ENCODE measurements at regions of chr21 and their contacts with region 1.

Region 1: DNA sequence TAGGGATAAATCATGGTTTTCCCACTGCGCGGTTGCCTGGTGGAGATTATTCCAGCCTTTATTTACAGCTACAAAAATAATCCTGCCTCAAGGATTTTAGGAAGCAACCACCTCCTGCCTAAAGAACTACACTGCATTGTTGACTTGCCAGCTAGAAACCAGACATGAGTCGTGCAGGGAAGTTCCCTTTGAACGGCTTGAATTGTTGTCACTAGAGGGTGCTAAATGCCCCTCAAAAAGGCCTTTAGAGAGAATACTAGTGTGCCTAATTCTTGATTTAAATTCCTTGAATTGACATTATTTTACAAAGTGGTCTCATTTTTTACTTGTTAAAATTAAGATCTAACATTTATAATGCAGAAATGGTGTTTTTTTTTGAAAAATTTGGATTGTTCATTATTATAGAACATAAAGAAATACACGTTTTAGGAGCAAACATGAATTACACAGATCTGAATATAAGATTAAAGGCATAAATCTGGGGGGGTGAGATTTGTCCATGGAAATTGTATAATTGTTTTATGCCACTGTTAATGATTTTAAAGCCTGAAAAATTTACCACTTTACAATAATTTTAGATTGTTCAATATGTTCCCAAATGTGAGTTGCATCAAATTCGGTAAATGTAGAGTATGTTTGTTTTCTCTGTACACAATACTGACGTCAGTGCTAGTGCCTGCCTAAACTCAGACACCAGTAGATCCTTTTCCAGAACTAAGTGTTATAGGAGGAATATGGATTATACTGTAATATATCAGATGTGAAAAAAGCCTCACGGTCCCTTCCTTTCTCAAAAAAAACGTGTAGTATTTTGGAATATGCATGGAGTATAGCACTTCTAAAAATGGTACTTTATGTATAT is 7.6 kb upstream of the ERG start:
- DNase-seq: peak in 1 of 2 donors; percentile 64
- ATAC-seq: peak; percentile 77 to 94 (median 88)
- H3K4me3 ChIP-seq: peak overlapping the region in 2 of 10 donors; percentile 14 to 26
- H3K27ac ChIP-seq: peak overlapping the region in 3 of 10 donors; percentile 3 to 13 (median 13)
- H3K4me1 ChIP-seq: peaks cover 0 to 49% (median 13%) of the 10 kb centered on the region in 9 donors
- H3K27me3 ChIP-seq: no peaks in the 10 kb centered on the region
- CTCF ChIP-seq: peak; percentile 50 to 90 (median 74)

Region 2: GRCh38 chr21:38380481-38381137 is 125.3 kb before region 1 on chr21:
- intact Hi-C with region 1: loop called in 1 of 10 experiments (anchors 10 kb)
- DNase-seq: no peak
- ATAC-seq: no peak
- H3K4me3 ChIP-seq: no peak overlapping the region
- H3K27ac ChIP-seq: no peak overlapping the region
- H3K4me1 ChIP-seq: peaks cover 0 to 31% (median 13%) of the 10 kb centered on the region in 9 donors
- H3K27me3 ChIP-seq: no peaks in the 10 kb centered on the region
- CTCF ChIP-seq: peak in 6 of 9 donors; percentile 10 to 39 (median 27)

Region 3: DNA sequence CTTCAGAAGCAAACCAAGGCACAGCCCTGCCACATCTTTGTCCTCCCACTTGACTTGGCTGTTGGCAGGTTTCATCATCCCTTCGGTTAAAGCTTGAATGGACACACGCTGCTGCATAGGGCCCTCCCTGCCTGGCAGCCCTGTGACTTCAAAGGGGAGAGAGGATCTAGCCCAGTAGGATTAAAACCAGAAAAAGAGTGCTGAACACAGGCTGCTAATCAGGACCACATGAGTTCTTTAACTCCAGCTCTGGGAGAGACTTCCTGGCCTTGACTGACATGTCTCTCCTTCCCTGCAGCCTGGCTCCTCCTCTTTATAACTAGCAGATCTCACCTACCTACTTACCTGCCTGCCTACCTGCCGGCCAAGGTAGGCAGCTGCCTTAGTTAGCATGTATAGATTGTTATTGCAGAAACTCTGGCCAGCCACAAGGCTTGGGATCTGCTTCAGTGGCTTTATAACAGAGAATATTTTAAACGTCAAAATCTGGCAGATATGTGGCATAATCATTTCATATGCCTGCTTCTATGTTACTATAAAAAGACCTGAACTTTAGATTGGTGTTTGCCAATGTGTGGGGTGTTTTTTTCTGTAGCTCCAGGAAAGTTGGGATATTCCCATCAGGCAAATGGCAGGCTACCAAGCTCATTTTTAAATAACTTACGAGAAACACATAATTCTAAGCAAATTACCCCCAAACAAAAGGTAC is 57.1 kb before region 1 on chr21:
- intact Hi-C with region 1: no loop called
- DNase-seq: no peak
- ATAC-seq: peak in 3 of 8 donors; percentile 39 to 51 (median 41)
- H3K4me3 ChIP-seq: no peak overlapping the region
- H3K27ac ChIP-seq: peak overlapping the region in 3 of 10 donors; percentile 1 to 17 (median 13)
- H3K4me1 ChIP-seq: peaks cover 0 to 34% (median 19%) of the 10 kb centered on the region in 9 donors
- H3K27me3 ChIP-seq: no peaks in the 10 kb centered on the region
- CTCF ChIP-seq: no peak

Region 4: GRCh38 chr21:38702196-38702595 is 196.3 kb after region 1 on chr21:
- intact Hi-C with region 1: loop called in 1 of 10 experiments (anchors 5 kb)
- DNase-seq: peak in 1 of 2 donors; percentile 22
- ATAC-seq: peak in 2 of 8 donors; percentile 21 to 35
- H3K4me3 ChIP-seq: peak overlapping the region in 2 of 10 donors; percentile 1 to 13
- H3K27ac ChIP-seq: no peak overlapping the region
- H3K4me1 ChIP-seq: peaks cover 0 to 5% (median 0%) of the 10 kb centered on the region in 9 donors
- H3K27me3 ChIP-seq: peaks cover 0 to 50% (median 0%) of the 10 kb centered on the region in 7 donors
- CTCF ChIP-seq: no peak

Region 5: DNA sequence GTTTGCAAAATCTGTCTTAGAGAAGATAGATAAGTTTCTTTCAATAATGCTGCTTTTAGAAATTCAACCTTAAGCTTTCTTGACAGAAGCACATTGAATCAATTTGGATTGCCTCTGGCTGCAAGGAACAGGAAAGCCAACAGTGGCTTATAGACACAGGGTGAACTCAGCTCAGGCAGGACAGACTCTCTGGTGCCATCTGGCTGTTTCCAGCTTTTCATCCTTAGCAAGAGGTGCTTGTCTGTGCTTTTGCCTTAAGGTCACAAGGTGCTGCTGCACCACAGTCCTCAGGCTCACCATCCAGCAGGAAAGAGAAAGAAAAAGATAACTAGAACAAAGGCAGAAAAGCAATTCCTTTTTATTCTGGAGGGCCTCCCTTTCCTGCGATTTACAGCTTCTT is 206.2 kb after region 1 on chr21:
- intact Hi-C with region 1: loop called in 6 of 10 experiments (anchors 5 to 10 kb)
- DNase-seq: peak in 1 of 2 donors; percentile 19
- ATAC-seq: peak in 3 of 8 donors; percentile 44 to 70 (median 63)
- H3K4me3 ChIP-seq: no peak overlapping the region
- H3K27ac ChIP-seq: no peak overlapping the region
- H3K4me1 ChIP-seq: no peaks in the 10 kb centered on the region
- H3K27me3 ChIP-seq: peaks cover 0 to 6% (median 0%) of the 10 kb centered on the region in 7 donors
- CTCF ChIP-seq: peak in 7 of 9 donors; percentile 42 to 67 (median 55)

Region 6: DNA sequence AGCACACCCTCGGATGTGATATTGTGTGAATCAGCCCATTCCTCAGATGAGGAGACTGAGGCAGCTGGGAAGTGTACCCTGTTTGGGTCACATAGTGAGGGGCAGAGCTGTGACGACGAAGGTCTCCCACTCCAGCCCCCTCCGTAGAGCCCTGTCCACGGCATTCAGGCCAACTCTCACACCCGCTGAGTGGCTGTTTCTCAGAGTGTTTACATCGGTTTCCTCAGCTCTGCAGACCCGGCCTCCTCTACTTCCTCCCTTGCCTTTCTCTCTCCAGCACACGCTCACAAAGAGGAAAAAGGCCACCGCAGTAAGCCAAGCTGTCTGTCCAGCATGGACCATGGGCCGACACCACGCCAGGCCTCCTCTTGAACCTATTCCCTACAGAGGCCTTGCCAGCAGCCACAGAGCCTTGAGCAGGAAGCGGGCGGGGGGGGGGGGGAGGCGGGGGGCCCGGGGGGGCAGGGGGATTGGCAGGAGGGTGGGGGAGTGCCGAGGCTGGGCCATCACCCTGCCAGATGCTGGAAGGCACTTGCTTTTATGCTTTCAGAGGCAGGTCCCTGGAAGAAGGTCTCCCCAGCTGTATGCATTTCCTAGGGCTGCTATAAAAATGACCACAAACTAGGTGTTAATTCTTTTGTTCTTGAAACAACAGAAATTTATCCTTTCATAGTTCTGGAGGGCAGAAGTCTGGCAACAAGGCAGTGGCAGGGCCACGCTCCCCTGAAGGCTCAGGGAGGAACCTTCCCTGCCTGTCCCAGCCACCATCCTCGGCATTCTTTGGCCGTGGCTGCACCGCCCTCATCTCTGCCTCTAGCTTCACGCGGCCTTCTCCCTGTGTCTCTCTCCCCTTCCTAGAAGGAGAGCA is 499.0 kb after region 1 on chr21:
- intact Hi-C with region 1: loop called in 1 of 10 experiments (anchors 10 kb)
- DNase-seq: peak; percentile 65 to 78
- ATAC-seq: peak; percentile 38 to 74 (median 65)
- H3K4me3 ChIP-seq: no peak overlapping the region
- H3K27ac ChIP-seq: peak overlapping the region; percentile 74 to 92 (median 84)
- H3K4me1 ChIP-seq: peaks cover 13 to 91% (median 76%) of the 10 kb centered on the region in 9 donors
- H3K27me3 ChIP-seq: no peaks in the 10 kb centered on the region
- CTCF ChIP-seq: no peak

Region 7: GRCh38 chr21:39137248-39138178 is 631.6 kb after region 1 on chr21:
- intact Hi-C with region 1: loop called in 9 of 10 experiments (anchors 1 to 10 kb)
- DNase-seq: no peak
- ATAC-seq: peak in 5 of 8 donors; percentile 28 to 55 (median 29)
- H3K4me3 ChIP-seq: no peak overlapping the region
- H3K27ac ChIP-seq: peak overlapping the region in 5 of 10 donors; percentile 26 to 64 (median 54)
- H3K4me1 ChIP-seq: peaks cover 0 to 17% (median 0%) of the 10 kb centered on the region in 9 donors
- H3K27me3 ChIP-seq: no peaks in the 10 kb centered on the region
- CTCF ChIP-seq: no peak